AG04450 (cell line): ENCODE measurements at regions of chr1 and their contacts with region 1.

Region 1: DNA sequence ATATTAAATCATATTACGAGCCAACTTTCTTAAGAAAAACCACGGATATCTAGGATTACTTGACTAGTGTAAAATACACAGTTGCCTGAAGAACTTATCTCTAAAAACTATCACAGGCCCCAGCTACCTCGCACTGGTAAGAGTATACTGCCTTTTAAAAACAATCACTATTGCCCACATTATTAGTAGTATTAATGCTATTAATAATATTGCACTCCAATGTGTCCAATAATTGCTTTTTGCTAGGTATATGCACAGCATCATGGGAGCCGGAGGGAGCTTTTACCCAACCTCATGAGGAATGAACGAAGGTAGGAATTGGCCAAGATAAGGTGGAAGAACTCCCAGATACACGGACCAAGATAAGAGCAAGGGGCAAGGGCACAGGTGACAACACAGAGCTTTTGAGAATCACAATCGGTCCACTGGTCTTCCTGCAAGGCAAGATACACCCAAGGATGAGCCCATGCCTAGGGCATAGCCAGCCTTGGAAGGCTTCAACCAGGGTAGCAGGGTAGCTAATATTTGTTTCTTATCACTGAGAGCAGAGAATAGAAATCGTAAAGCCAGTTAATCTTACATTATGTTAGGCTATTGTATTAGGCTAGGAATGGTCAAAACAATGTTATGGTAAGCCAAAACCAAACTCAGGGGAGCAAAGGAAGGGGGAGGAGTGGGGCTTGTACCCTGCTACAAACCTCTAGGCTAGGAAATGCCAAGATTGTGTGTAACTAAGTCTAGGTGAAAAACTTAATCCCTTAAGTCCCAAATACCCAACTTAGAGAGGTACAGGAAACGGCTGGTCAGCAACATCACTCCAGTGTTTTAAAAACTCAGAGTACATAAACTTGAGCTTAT is 9.4 kb downstream of the GLUL start:
- DNase-seq: no peak
- H3K4me3 ChIP-seq: no peak overlapping the region
- H3K27ac ChIP-seq: no peak overlapping the region
- H3K27me3 ChIP-seq: no peaks in the 10 kb centered on the region
- CTCF ChIP-seq: no peak

Region 2: DNA sequence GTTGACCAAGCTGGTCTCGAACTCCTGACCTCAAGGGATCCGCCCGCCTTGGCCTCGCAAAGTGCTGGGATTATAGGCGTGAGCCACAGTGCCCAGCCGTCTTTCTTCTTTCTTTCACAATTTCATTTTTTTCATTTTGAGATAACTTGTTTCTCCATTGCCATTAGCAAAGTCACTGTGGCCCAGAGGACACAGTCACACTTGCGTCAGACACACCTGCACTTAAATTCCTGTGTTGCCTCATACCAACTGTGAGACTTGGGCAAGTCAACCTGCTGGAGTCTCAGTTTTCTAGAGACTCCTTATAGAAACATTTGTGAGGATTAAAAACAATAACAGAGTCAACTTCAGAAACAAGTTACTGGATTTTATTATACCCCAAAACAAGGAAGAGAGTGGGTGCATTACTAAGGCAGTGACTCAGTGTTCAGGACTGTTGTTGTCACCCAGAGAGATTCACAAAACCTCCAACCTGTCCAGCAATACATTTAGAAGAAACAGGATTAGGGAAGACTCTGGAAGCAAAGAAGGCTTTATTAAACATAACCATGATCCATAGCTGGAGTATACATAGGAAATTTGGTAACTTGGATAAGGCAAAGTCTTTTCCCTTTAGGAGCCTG is 15.7 kb after region 1 on chr1:
- CTCF ChIA-PET with region 1: interaction called, 32 read pairs
- POLR2A ChIA-PET with region 1: no interaction called
- DNase-seq: no peak
- H3K4me3 ChIP-seq: no peak overlapping the region
- H3K27ac ChIP-seq: no peak overlapping the region
- H3K27me3 ChIP-seq: no peaks in the 10 kb centered on the region
- CTCF ChIP-seq: no peak

Region 3: DNA sequence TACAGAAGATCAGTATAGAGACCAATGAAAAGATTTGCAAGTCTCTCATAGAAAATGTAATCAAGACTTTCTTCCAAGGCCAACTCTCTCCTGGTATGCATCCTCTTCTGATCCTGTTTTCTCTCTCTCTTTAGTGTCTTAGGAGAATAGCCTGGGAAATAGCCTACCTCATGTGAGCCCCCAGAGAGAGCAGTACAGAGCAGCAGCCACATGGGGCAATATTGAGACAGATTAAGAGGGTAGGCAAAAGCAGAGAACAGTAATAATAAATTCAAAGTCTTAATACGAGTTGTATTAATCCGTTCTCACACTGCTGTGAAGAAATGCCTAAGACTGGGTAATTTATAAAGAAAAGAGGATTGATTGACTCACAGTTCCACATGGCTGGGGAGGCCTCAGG is 145.5 kb after region 1 on chr1:
- CTCF ChIA-PET with region 1: no interaction called
- POLR2A ChIA-PET with region 1: no interaction called
- DNase-seq: no peak
- H3K4me3 ChIP-seq: no peak overlapping the region
- H3K27ac ChIP-seq: no peak overlapping the region
- H3K27me3 ChIP-seq: no peaks in the 10 kb centered on the region
- CTCF ChIP-seq: no peak

Region 4: GRCh38 chr1:182649041-182649440 is 266.9 kb after region 1 on chr1:
- CTCF ChIA-PET with region 1: no interaction called
- POLR2A ChIA-PET with region 1: no interaction called
- DNase-seq: no peak
- H3K4me3 ChIP-seq: no peak overlapping the region
- H3K27ac ChIP-seq: no peak overlapping the region
- H3K27me3 ChIP-seq: no peaks in the 10 kb centered on the region
- CTCF ChIP-seq: no peak